ENCODE measurements at regions of chr17 and their contacts with region 1.

Region 1: GRCh38 chr17:78970834-78971773 is 8.6 kb downstream of the LGALS3BP start:
- DNase-seq: peak; percentile 73 to 97
- H3K4me3 ChIP-seq: no peak overlapping the region
- CTCF ChIP-seq: peak in 1 of 3 donors; percentile 70
- POLR2A ChIP-seq: no peak

Region 2: DNA sequence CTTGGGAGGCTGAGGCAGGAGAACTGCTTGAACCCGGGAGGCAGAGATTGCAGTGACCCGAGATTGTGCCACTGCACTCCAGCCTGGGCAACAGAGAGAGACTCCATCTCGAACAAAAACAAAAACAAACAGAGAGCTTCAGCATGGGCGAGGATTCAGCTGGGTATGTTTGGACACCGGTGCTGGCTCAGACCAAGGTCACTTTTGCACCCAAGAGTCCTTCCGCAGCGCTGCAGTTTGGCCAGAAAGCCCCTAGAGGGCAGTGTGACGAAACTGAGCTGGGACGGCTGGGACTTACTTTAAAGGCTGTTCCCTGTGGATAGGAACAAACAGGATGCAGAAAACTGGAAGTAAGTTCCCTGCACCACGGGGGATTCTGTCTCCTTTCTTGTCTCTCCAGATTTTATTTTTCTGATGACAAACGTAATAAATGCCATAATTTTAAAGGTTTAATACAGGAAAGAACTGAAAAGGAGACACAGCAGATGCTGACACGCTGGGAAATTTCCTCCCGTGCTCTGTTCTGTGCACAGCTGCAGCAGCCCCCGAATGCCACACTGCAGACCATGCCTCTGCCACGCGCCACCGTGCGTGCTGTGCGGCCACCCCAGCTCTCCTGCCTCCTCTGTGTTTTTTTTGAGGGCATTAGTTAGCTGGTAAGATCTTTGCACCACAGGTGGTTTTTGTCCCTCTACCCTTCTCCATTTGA is 105.3 kb before region 1 on chr17:
- intact Hi-C with region 1: loop called (anchors 5 kb)
- DNase-seq: peak; percentile 75 to 95
- H3K4me3 ChIP-seq: no peak overlapping the region
- CTCF ChIP-seq: peak in 1 of 3 donors; percentile 90
- POLR2A ChIP-seq: no peak

Region 3: DNA sequence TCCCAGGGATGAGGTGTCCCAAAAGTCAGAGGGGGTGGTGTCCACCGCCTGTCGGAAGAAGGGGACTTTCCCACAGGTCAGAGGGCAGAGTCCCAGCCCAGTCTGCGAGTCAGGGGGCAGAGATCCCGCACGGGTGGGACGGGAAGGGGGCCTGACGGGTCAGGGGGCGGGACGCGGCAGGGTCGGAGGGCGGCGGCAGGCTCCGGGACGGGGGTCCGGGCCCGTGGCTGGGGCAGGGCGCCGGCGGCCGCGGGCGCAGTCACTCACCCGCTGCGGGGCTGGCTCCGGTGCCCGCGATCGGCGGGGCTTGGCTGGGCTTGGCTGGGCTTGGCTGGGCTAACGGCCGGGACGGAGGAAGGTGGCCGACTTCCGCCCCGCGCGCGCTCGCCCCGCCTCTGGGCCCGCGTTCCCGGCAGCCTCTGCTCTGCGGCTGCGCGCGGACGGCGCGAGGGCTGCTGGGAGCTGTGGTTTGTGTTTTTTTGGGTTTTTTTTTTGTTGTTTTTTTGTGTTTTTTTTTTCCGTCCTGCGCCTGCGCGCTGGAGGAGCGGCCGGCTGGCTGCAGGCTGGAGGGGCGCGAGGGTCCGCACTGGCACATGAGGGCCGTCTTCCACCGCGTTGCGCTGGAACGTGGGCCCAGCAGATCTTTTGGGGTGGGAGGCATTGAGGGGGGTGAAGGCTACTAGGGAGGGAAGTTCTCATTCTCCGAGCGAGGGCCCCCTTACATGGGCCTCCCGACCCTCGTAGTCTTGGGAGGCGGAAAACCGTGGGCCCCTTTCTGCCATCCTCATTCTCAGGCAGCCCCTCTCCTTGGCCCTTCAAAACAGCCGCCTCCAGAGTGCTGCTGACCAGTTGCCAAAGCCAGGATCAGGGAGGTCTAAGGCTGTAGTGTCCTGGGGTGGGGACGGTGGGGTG is 38.5 kb after region 1 on chr17 and contains the start of gene CANT1:
- intact Hi-C with region 1: no loop called
- DNase-seq: peak in 1 of 2 donors; percentile 95
- H3K4me3 ChIP-seq: peak within 1 kb of the TSS; percentile 88
- CTCF ChIP-seq: no peak
- POLR2A ChIP-seq: peak in 1 of 2 donors; percentile 39
- total RNA-seq, gene CANT1: 18.1 to 39.4 (median 28.4) TPM

Region 4: GRCh38 chr17:79023886-79024771 is 53.0 kb after region 1 on chr17 and contains the start of gene C1QTNF1:
- intact Hi-C with region 1: no loop called
- DNase-seq: peak in 1 of 2 donors; percentile 92
- H3K4me3 ChIP-seq: peak within 1 kb of the TSS; percentile 31
- CTCF ChIP-seq: no peak
- POLR2A ChIP-seq: no peak
- total RNA-seq, gene C1QTNF1: 24.3 to 53.1 (median 29.5) TPM